Ascending aorta (tissue), 2 donors: ENCODE measurements at regions of chr3 and their contacts with region 1.

Region 1: GRCh38 chr3:122679085-122679881 is 1.4 kb upstream of the PARP14 start:
- DNase-seq: peak; percentile 17 to 90
- H3K4me3 ChIP-seq: peak overlapping the region; percentile 90 to 96
- H3K27ac ChIP-seq: peak overlapping the region; percentile 98
- H3K4me1 ChIP-seq: peaks cover 0 to 23% of the 10 kb centered on the region in 2 donors
- H3K27me3 ChIP-seq: no peaks in the 10 kb centered on the region
- CTCF ChIP-seq: peak; percentile 65 to 89 (median 68)

Region 2: GRCh38 chr3:121545574-121546455 is 1133.5 kb before region 1 on chr3 and contains the start of gene POLQ:
- intact Hi-C with region 1: loop called (anchors 2 kb)
- DNase-seq: peak; percentile 65 to 93
- H3K4me3 ChIP-seq: peak within 1 kb of the TSS; percentile 55 to 66
- H3K27ac ChIP-seq: peak within 1 kb of the TSS; percentile 43 to 58
- H3K4me1 ChIP-seq: peaks cover 3 to 5% of the 10 kb centered on the region in 2 donors
- H3K27me3 ChIP-seq: no peaks in the 10 kb centered on the region
- CTCF ChIP-seq: no peak
- total RNA-seq, gene POLQ: not detected

Region 3: GRCh38 chr3:122383771-122384697 is 295.2 kb before region 1 on chr3 and contains the start of gene FAM162A:
- intact Hi-C with region 1: loop called (anchors 2 kb)
- DNase-seq: peak; percentile 68 to 96
- H3K4me3 ChIP-seq: peak within 1 kb of the TSS; percentile 73 to 76
- H3K27ac ChIP-seq: peak within 1 kb of the TSS; percentile 82 to 90
- H3K4me1 ChIP-seq: peaks cover 0 to 6% of the 10 kb centered on the region in 2 donors
- H3K27me3 ChIP-seq: no peaks in the 10 kb centered on the region
- CTCF ChIP-seq: peak; percentile 43 to 61 (median 48)
- total RNA-seq, gene FAM162A: 17.1 TPM

Region 4: DNA sequence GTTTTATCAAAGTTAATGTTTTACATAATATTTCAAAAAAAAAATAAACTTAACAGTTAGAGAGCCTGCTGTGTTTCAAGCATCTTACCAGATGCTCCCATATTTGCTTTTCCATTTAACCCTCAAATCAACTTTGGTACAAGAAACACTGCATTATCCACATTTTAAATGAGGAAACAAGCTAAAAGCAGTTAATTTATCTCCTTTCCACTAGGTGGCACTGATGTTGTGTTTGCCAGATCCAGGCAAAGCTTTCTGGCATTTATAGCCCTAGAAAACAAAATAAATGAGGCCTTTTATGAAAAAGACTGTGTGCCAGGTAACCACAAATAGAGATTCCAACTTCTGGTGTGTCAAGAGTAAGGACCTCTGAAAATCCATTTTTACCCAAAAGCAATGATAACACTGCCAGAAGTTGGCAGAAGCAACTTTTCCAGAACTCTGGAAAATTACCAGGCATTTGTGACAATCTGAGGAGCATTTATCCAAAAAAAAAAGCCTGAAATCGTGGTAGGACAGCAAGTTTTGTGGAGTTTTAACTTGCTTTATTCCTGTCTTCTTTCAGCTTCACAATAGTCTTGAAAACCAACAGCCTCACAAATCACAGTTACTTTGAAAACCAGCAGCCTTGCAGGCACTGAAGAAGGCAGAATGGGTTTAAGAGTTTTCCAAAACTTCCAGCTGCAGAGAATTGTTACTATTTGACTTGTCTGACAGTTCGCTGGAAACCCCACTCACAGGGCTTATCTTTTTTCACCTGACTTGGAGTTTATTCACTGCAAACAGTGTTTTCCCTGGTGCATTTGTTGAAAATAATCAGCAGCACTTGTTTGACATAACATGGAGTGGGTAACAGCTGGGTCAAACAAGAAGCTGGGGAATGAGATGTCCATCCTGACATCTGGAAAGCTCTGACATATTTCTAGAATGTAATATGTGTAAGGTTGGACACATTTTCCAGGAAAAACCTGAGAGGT is 286.1 kb before region 1 on chr3:
- intact Hi-C with region 1: loop called (anchors 2 kb)
- DNase-seq: no peak
- H3K4me3 ChIP-seq: no peak overlapping the region
- H3K27ac ChIP-seq: peak overlapping the region in 1 of 2 donors; percentile 23
- H3K4me1 ChIP-seq: peaks cover 0 to 2% of the 10 kb centered on the region in 2 donors
- H3K27me3 ChIP-seq: no peaks in the 10 kb centered on the region
- CTCF ChIP-seq: peak; percentile 33 to 76 (median 65)

Region 5: GRCh38 chr3:122458992-122459391 is 220.3 kb before region 1 on chr3:
- intact Hi-C with region 1: loop called (anchors 5 kb)
- DNase-seq: no peak
- H3K4me3 ChIP-seq: no peak overlapping the region
- H3K27ac ChIP-seq: no peak overlapping the region
- H3K4me1 ChIP-seq: no peaks in the 10 kb centered on the region
- H3K27me3 ChIP-seq: no peaks in the 10 kb centered on the region
- CTCF ChIP-seq: peak in 2 of 3 experiments; percentile 19 to 40

Region 6: GRCh38 chr3:122564155-122564912 is 114.9 kb before region 1 on chr3 and contains the starts of genes DTX3L and PARP9:
- intact Hi-C with region 1: loop called (anchors 1 kb)
- DNase-seq: peak; percentile 29 to 88
- H3K4me3 ChIP-seq: peak within 1 kb of the TSS; percentile 90 to 94
- H3K27ac ChIP-seq: peak within 1 kb of the TSS; percentile 87 to 91
- H3K4me1 ChIP-seq: peaks cover 4 to 16% of the 10 kb centered on the region in 2 donors
- H3K27me3 ChIP-seq: no peaks in the 10 kb centered on the region
- CTCF ChIP-seq: no peak
- total RNA-seq, gene DTX3L: 22.4 TPM
- total RNA-seq, gene PARP9: 8.1 TPM

Region 7: DNA sequence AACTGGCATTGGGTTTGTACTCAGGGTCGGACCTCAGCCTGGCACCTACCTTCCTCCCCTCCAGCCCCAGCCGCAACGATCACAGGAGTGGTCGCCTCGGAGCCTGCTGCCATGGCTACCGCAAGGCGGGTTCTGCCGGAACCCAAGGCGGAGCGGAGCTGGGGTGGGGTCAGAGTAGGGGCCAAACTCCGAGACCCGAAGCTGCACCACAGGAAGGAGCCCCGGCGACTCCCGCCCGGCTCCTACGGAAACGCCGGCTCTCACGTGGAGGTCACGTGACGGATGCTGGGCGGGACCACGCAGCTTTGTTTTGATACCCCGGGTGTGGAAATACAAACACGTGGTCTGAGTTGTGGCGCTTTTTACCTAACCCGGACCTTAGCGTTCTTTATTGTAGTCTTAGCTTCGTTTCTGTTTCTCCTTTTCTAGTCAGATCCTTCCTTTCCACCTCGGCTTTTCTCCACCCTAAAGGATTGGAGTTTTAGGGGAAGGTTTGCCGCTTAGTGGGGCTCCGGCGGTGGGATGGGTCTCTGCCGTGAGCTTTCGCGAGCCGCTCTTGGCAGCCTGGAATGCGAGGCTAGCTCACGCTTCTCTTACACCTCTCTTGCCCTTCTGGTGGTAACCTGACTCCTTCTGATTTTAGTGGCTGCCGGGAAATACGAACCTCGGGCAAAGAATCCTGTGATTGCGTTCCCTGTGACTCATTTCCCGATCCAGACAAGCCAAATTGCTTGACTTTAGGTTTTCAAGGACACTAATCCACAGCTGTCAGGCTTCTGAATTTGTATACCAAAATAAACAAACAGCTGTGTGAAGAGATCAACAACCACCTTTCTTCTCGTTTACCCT is 114.5 kb after region 1 on chr3 and contains the start of gene HSPBAP1:
- intact Hi-C with region 1: loop called (anchors 1 kb)
- DNase-seq: peak; percentile 74 to 96
- H3K4me3 ChIP-seq: peak within 1 kb of the TSS; percentile 89 to 98
- H3K27ac ChIP-seq: peak within 1 kb of the TSS; percentile 96 to 100
- H3K4me1 ChIP-seq: peaks cover 3 to 5% of the 10 kb centered on the region in 2 donors
- H3K27me3 ChIP-seq: no peaks in the 10 kb centered on the region
- CTCF ChIP-seq: no peak
- total RNA-seq, gene HSPBAP1: 2.4 TPM